ENCODE measurements at regions of chr7 and their contacts with region 1.

Region 1: GRCh38 chr7:90655566-90655965 is 59.4 kb downstream of the CDK14 start:
- DNase-seq: peak; percentile 80
- H3K4me3 ChIP-seq: no peak overlapping the region
- H3K27ac ChIP-seq: peak overlapping the region; percentile 43
- H3K4me1 ChIP-seq: peaks cover 16% of the 10 kb centered on the region
- H3K27me3 ChIP-seq: no peaks in the 10 kb centered on the region
- CTCF ChIP-seq: no peak

Region 2: DNA sequence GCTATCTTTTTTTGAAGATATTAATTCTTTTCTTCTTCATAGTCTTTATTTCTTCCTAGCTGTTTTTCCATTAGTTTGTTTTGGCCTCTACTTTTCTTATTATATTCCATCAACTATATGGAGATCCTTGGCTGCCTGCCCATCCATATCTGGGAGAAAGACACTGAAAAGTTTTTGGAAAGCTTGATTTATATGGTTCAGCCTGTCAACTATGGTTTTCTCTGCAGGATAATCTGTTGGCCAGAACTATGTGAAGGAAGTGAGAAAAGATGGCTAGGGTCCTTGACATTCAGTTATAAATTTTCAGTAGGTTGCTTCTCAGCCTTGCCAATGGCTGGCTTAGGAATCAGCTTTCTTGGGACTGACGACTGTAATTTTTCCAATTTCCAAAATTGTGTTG is 69.5 kb before region 1 on chr7:
- CTCF ChIA-PET with region 1: no interaction called
- dilution Hi-C with region 1: loop called (anchors 5 kb)
- in situ Hi-C with region 1: no loop called
- intact Hi-C with region 1: no loop called
- DNase-seq: no peak
- H3K4me3 ChIP-seq: no peak overlapping the region
- H3K27ac ChIP-seq: no peak overlapping the region
- H3K4me1 ChIP-seq: no peaks in the 10 kb centered on the region
- H3K27me3 ChIP-seq: no peaks in the 10 kb centered on the region
- CTCF ChIP-seq: no peak

Region 3: DNA sequence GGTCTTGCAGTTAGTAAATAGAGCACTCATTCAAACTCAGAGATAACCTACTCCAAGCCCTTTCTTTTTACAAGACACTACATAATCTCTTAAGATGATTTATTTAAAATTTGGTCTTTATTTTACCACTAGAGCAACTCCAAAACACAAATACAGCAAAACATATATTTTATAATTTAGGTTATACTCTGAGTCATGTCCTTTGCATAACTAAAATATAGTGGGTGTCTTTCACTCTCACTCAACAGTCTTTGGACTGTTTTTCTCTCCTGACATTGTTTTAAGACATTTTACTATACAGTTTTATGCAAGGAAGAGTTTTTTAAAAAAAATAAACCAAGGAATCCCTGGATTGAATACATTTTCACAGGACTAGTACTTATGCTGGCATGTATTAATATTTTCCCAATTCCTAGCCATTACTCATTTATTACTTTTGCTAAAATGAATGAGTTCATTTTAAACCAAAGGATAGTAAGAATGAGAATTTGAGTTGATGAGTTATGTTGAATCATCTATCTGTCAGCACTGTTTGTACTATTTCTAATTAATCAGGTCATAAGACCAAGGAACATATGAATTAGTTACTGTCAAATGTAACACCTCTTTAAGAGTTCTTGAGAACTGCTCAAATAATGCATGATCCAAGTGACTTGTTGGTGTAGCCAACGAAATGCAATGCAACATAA is 305.6 kb after region 1 on chr7:
- CTCF ChIA-PET with region 1: interaction called, 22 read pairs
- dilution Hi-C with region 1: no loop called
- in situ Hi-C with region 1: no loop called
- intact Hi-C with region 1: no loop called
- DNase-seq: peak; percentile 57
- H3K4me3 ChIP-seq: no peak overlapping the region
- H3K27ac ChIP-seq: no peak overlapping the region
- H3K4me1 ChIP-seq: peaks cover 11% of the 10 kb centered on the region
- H3K27me3 ChIP-seq: no peaks in the 10 kb centered on the region
- CTCF ChIP-seq: no peak

Measured in mammary epithelial cell (primary cell).